HepG2 (cell line): ENCODE measurements at regions of chr5 and their contacts with region 1.

Region 1: GRCh38 chr5:93915142-93915553 is 173.7 kb upstream of the POU5F2 start:
- DNase-seq: peak; percentile 50
- ATAC-seq: peak; percentile 65
- H3K4me3 ChIP-seq: no peak overlapping the region
- H3K27ac ChIP-seq: no peak overlapping the region
- H3K4me1 ChIP-seq: peaks cover 9% of the 10 kb centered on the region; the same call in 1 of the 2 replicates
- H3K27me3 ChIP-seq: no peaks in the 10 kb centered on the region; a peak in 1 of 5 replicates
- CTCF ChIP-seq: peak; percentile 74
- EP300 ChIP-seq: no peak
- POLR2A ChIP-seq: no peak
- RAD21 ChIP-seq: peak; percentile 51; the same call in 1 of the 2 replicates

Region 2: DNA sequence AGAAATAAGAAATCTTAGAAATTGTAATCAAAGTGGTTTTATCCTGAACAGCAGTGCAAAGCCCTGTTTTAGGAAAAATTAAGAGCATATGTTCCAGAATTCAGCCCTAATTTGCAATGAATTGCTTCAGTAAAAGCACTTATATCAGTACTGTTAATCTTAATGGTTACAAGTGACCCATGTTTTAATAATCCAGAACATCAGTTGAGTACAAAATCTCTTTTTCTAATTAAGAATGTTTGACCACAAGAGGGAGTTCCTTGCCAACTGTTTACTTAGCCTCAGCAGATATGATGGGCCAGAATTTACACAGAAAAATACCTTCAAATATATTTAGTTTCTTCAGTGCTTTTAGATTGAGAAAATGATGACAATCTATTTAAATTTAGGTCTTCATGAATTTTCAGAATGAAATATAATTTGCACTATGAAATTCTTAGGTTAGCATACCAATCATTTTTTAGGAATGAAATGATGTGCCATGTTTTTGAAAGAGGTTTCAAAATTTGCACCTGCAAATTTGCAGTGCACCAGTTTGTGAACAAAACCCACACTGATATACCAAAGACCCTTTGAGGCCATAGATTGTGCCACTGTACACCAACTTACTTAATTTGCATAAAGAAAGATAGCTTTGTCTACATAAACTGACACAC is 1605.7 kb before region 1 on chr5:
- CTCF ChIA-PET with region 1: no interaction called
- POLR2A ChIA-PET with region 1: no interaction called
- in situ Hi-C with region 1: no loop called
- intact Hi-C with region 1: loop called (anchors 2 kb)
- DNase-seq: peak; percentile 11
- ATAC-seq: no peak
- H3K4me3 ChIP-seq: no peak overlapping the region
- H3K27ac ChIP-seq: no peak overlapping the region
- H3K4me1 ChIP-seq: no peaks in the 10 kb centered on the region
- H3K27me3 ChIP-seq: no peaks in the 10 kb centered on the region
- CTCF ChIP-seq: peak; percentile 54
- EP300 ChIP-seq: no peak
- POLR2A ChIP-seq: no peak
- RAD21 ChIP-seq: no peak

Region 3: GRCh38 chr5:93607367-93608258 is 307.5 kb before region 1 on chr5:
- CTCF ChIA-PET with region 1: no interaction called
- POLR2A ChIA-PET with region 1: no interaction called
- in situ Hi-C with region 1: no loop called
- intact Hi-C with region 1: loop called (anchors 1 kb)
- DNase-seq: peak; percentile 44
- ATAC-seq: peak; percentile 81
- H3K4me3 ChIP-seq: no peak overlapping the region
- H3K27ac ChIP-seq: no peak overlapping the region
- H3K4me1 ChIP-seq: peaks cover 21% of the 10 kb centered on the region
- H3K27me3 ChIP-seq: peaks cover 3 to 73% of the 10 kb centered on the region in 2 experiments; a peak in 4 of 5 replicates
- CTCF ChIP-seq: peak; percentile 83
- EP300 ChIP-seq: no peak
- POLR2A ChIP-seq: no peak
- RAD21 ChIP-seq: peak; percentile 28; the same call in 1 of the 2 replicates

Region 4: DNA sequence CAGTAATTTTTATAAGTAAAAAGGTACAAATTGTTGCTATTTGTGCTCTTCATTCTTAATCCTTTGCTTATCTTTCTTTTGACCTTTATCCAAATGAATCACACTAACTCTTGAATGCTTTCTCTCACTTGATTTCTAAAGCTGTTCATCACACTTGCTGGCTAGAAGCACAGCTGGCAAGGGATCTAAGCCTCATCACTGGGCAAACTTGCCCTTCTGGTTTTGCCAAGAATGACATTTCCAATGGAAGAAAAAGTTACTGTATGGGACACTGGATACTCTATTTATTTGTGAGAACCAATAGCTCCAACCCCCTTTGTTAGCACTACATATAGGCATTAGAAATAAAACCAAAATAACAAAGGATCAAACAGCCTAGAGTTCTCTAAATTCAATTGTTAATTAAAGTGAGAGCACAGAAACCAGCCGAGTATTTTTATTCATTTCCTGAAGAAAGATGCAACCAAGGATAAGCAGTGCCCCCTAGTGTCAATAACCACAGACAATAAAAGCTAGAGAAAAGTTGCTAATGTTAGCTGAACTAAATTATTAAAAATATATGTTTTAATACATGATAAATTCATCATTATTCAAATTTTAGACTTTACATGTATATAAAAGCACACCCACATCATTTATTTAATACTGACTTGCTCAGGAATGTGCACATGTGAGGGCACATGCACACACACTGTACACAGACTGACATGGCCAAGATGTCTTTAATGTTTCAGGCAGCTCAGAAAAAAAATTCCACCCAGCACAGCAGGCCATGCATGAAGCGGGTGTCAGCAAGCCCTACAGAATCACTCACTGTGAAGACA is 113.9 kb before region 1 on chr5:
- CTCF ChIA-PET with region 1: no interaction called
- POLR2A ChIA-PET with region 1: no interaction called
- in situ Hi-C with region 1: no loop called
- intact Hi-C with region 1: loop called (anchors 5 kb)
- DNase-seq: peak; percentile 45
- ATAC-seq: peak; percentile 54
- H3K4me3 ChIP-seq: no peak overlapping the region
- H3K27ac ChIP-seq: no peak overlapping the region
- H3K4me1 ChIP-seq: peaks cover 5% of the 10 kb centered on the region
- H3K27me3 ChIP-seq: no peaks in the 10 kb centered on the region
- CTCF ChIP-seq: peak; percentile 61
- EP300 ChIP-seq: no peak
- POLR2A ChIP-seq: no peak
- RAD21 ChIP-seq: peak; percentile 37; the same call in 1 of the 2 replicates

Region 5: DNA sequence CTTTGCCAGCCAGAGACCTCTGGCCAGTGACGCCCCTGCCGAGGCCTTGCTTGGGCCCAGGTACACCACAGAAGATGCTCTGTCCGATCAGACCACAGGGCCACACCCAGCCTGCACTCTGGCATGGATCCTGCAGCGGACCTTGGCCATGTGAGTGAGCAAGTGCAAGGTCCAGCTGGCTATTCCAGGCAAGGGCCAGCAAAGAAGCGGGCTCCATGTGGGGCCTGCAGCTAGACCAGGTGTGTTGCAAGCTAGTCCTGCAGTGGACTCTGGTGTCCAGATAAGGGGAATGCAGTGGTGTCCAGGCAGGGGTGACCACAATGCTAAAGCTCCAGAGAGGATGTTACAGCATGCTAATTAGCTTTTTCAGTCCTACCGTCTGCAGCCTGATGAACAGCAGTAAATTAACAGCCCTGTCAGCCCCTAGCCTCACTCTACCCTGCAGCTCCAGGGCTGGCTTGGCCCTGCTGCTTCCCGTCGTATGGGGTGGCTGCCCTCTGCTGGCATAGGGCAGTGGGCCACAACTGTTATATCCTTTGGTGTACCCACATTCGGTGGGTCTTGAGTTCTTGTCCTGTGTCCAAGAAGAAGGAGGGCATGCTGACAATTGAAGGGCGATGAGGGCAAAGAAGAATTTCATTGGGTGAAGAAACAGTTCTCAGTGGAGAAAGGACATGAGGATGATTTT is 110.8 kb after region 1 on chr5:
- CTCF ChIA-PET with region 1: no interaction called
- POLR2A ChIA-PET with region 1: no interaction called
- in situ Hi-C with region 1: no loop called
- intact Hi-C with region 1: loop called (anchors 5 kb)
- DNase-seq: peak; percentile 62
- ATAC-seq: peak; percentile 99
- H3K4me3 ChIP-seq: no peak overlapping the region
- H3K27ac ChIP-seq: no peak overlapping the region
- H3K4me1 ChIP-seq: peaks cover 20% of the 10 kb centered on the region
- H3K27me3 ChIP-seq: no peaks in the 10 kb centered on the region
- CTCF ChIP-seq: peak; percentile 75
- EP300 ChIP-seq: no peak
- POLR2A ChIP-seq: no peak
- RAD21 ChIP-seq: peak; percentile 68; the same call in 1 of the 2 replicates

Region 6: DNA sequence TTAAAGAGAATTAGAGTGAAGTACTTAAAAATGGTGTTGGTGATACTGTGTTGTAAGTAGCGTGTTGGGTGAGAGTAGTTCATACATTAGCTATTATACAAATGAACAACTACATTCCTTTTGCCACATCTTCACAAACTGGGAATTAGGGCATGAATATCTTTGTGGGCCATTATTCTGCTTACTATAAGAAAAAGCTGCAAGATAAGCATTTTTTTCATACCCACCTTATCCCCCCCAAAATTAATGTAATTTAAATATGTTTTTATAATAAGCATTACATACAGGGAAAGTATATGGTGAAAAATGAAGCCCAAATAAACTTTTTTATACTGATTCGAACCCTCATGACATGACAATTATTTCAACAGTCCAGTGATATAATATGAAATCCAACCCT is 1545.5 kb after region 1 on chr5:
- CTCF ChIA-PET with region 1: no interaction called
- POLR2A ChIA-PET with region 1: no interaction called
- in situ Hi-C with region 1: no loop called
- intact Hi-C with region 1: no loop called
- DNase-seq: no peak
- ATAC-seq: no peak
- H3K4me3 ChIP-seq: no peak overlapping the region
- H3K27ac ChIP-seq: no peak overlapping the region
- H3K4me1 ChIP-seq: no peaks in the 10 kb centered on the region
- H3K27me3 ChIP-seq: no peaks in the 10 kb centered on the region
- CTCF ChIP-seq: no peak
- EP300 ChIP-seq: no peak
- POLR2A ChIP-seq: no peak
- RAD21 ChIP-seq: no peak